ENCODE measurements at regions of chr19 and their contacts with region 1.

Region 1: GRCh38 chr19:43765109-43765876 is 10.5 kb upstream of the SMG9 start:
- DNase-seq: peak; percentile 75
- ATAC-seq: peak; percentile 76
- H3K4me3 Mint-ChIP-seq: peak overlapping the region; percentile 58
- H3K27ac Mint-ChIP-seq: peak overlapping the region; percentile 89
- H3K4me1 Mint-ChIP-seq: peaks cover 31% of the 10 kb centered on the region
- H3K27me3 Mint-ChIP-seq: no peaks in the 10 kb centered on the region

Region 2: GRCh38 chr19:43780706-43781525 is 15.6 kb after region 1 on chr19 and contains the start of gene KCNN4:
- POLR2A ChIA-PET with region 1: interaction called, 74 read pairs
- DNase-seq: peak; percentile 72
- ATAC-seq: peak; percentile 67
- H3K4me3 Mint-ChIP-seq: peak within 1 kb of the TSS; percentile 84
- H3K27ac Mint-ChIP-seq: peak within 1 kb of the TSS; percentile 84
- H3K4me1 Mint-ChIP-seq: peaks cover 62% of the 10 kb centered on the region
- H3K27me3 Mint-ChIP-seq: no peaks in the 10 kb centered on the region
- total RNA-seq, gene KCNN4: 38.3 to 45.4 TPM